Mammary epithelial cell (primary cell): ENCODE measurements at regions of chr7 and their contacts with region 1.

Region 1: DNA sequence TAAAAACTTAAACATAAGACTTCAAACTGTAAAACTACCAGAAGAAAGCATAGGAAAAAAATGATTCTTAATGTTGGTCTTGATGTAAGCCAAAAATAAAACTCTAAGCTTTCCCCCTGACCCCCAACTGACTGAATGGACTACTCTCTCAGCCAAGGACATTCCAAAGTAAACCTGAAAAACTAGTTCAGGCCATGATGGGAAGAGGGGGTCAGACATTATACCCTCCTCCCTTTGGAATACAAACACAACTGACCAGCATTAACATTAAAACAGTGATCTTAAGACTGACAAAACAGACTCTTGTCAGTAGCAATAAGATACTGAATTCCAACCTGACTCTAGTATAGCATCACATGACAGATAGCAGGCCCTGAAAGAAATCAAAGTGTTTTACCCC is 13.5 kb upstream of the LRGUK start:
- DNase-seq: no peak
- H3K4me3 ChIP-seq: no peak overlapping the region
- H3K27ac ChIP-seq: no peak overlapping the region
- H3K4me1 ChIP-seq: no peaks in the 10 kb centered on the region
- H3K27me3 ChIP-seq: no peaks in the 10 kb centered on the region
- CTCF ChIP-seq: no peak

Region 2: GRCh38 chr7:134101716-134102115 is 11.9 kb before region 1 on chr7:
- CTCF ChIA-PET with region 1: no interaction called
- dilution Hi-C with region 1: no loop called
- in situ Hi-C with region 1: no loop called
- intact Hi-C with region 1: loop called (anchors 1 kb)
- DNase-seq: no peak
- H3K4me3 ChIP-seq: no peak overlapping the region
- H3K27ac ChIP-seq: no peak overlapping the region
- H3K4me1 ChIP-seq: no peaks in the 10 kb centered on the region
- H3K27me3 ChIP-seq: no peaks in the 10 kb centered on the region
- CTCF ChIP-seq: no peak

Region 3: GRCh38 chr7:134154581-134155130 is 41.0 kb after region 1 on chr7:
- CTCF ChIA-PET with region 1: no interaction called
- dilution Hi-C with region 1: no loop called
- in situ Hi-C with region 1: no loop called
- intact Hi-C with region 1: no loop called
- DNase-seq: peak; percentile 2
- H3K4me3 ChIP-seq: no peak overlapping the region
- H3K27ac ChIP-seq: no peak overlapping the region
- H3K4me1 ChIP-seq: no peaks in the 10 kb centered on the region
- H3K27me3 ChIP-seq: no peaks in the 10 kb centered on the region
- CTCF ChIP-seq: no peak